ENCODE measurements at regions of chr19 and their contacts with region 1.

Region 1: GRCh38 chr19:58332697-58333096 is 5.9 kb downstream of the ZSCAN22 start:
- DNase-seq: no peak
- H3K4me3 Mint-ChIP-seq: no peak overlapping the region
- H3K27ac Mint-ChIP-seq: no peak overlapping the region
- H3K4me1 Mint-ChIP-seq: peaks cover 9% of the 10 kb centered on the region
- H3K27me3 Mint-ChIP-seq: no peaks in the 10 kb centered on the region
- CTCF ChIP-seq: no peak

Region 2: GRCh38 chr19:58346961-58347931 is 14.5 kb after region 1 on chr19:
- CTCF ChIA-PET with region 1: interaction called, 7 read pairs
- POLR2A ChIA-PET with region 1: interaction called, 17 read pairs
- intact Hi-C with region 1: no loop called
- DNase-seq: peak; percentile 50
- H3K4me3 Mint-ChIP-seq: peak overlapping the region; percentile 84
- H3K27ac Mint-ChIP-seq: peak overlapping the region; percentile 64
- H3K4me1 Mint-ChIP-seq: peaks cover 5% of the 10 kb centered on the region
- H3K27me3 Mint-ChIP-seq: no peaks in the 10 kb centered on the region
- CTCF ChIP-seq: no peak

Measured in MCF 10A (cell line).